ENCODE measurements at regions of chr19 and their contacts with region 1.

Region 1: DNA sequence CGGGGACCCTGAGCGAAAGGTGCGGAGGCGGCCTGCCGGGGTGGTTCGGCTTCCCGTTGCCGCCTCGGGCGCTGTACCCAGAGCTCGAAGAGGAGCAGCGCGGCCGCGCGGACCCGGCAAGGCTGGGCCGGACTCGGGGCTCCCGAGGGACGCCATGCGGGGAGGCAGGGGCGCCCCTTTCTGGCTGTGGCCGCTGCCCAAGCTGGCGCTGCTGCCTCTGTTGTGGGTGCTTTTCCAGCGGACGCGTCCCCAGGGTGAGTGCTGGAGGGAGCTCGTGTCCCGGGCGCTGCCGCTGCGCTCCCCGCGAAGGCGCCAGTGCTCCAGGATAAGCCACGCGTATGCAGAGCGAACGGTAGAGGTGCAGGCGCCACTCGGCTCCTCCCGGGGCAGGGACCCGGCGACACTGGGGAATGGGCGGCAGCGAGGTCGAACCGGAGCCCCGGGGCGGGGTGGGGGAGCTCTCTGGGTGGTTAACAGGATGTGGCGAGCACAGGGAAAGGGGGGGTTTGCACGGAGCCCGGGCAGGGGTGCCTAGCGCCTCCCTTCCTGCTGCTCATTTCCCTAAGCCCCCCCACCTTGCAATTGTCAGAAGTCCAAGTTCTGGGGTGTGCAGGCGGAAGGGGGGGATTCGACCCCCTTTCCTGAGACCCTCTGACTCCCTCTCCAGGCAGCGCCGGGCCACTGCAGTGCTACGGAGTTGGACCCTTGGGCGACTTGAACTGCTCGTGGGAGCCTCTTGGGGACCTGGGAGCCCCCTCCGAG is at the start of gene IL27RA:
- DNase-seq: peak; percentile 85
- ATAC-seq: peak; percentile 85
- H3K4me3 Mint-ChIP-seq: peak within 1 kb of the TSS; percentile 97
- H3K27ac Mint-ChIP-seq: peak within 1 kb of the TSS; percentile 97
- H3K4me1 Mint-ChIP-seq: peaks cover 15% of the 10 kb centered on the region
- H3K27me3 Mint-ChIP-seq: peaks cover 4% of the 10 kb centered on the region
- total RNA-seq, gene IL27RA: 41.6 to 43.8 TPM

Region 2: DNA sequence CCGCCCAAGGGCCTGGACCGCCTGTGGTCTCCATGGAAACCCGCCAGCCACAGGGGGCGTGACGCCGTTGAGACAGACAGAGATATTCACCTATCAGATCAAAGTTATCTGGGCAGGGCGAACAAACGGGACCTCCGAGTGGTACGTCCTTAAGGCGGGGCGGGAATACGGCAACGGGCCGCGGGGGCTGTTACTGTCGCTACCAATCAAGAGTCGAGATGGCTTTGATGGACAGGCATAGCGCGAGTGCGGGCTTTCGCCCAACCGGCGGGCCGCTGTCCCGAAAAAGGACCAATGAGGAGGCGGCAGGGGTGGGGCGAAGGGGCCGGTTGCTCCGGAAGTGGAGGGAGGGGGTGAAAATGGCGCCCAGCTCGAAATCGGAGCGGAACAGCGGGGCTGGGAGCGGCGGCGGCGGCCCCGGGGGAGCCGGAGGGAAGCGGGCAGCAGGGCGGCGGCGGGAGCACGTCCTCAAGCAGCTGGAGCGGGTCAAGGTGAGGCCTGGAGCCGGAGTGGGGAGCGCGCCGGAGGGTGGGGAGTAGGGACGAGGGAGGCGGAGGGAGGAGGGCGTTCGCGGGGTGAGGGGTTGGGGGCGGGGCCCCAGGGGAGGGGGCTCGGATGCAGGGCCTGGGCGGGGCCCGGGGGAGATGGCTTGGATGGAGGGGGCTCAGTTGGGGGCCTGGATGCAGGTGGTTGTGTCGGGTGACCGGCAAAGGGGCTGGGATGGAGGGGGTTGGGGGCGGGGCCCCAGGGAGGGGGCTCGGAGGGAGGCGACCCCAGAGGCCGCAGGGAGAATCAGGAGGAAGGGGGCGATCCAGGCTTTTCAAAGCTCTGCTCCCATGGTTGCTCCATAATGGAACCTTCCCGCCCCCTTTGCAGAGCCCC is 79.5 kb before region 1 on chr19 and contains the start of gene DCAF15:
- POLR2A ChIA-PET with region 1: interaction called, 30 read pairs
- DNase-seq: peak; percentile 95
- ATAC-seq: peak; percentile 99
- H3K4me3 Mint-ChIP-seq: peak within 1 kb of the TSS; percentile 99
- H3K27ac Mint-ChIP-seq: peak within 1 kb of the TSS; percentile 93
- H3K4me1 Mint-ChIP-seq: peaks cover 14% of the 10 kb centered on the region
- H3K27me3 Mint-ChIP-seq: no peaks in the 10 kb centered on the region
- total RNA-seq, gene DCAF15: 105 to 106 TPM

Region 3: GRCh38 chr19:13986348-13986904 is 45.5 kb before region 1 on chr19:
- POLR2A ChIA-PET with region 1: interaction called, 43 read pairs
- DNase-seq: peak; percentile 98
- ATAC-seq: peak; percentile 93
- H3K4me3 Mint-ChIP-seq: peak overlapping the region; percentile 69
- H3K27ac Mint-ChIP-seq: peak overlapping the region; percentile 98
- H3K4me1 Mint-ChIP-seq: peaks cover 60% of the 10 kb centered on the region
- H3K27me3 Mint-ChIP-seq: no peaks in the 10 kb centered on the region

Region 4: DNA sequence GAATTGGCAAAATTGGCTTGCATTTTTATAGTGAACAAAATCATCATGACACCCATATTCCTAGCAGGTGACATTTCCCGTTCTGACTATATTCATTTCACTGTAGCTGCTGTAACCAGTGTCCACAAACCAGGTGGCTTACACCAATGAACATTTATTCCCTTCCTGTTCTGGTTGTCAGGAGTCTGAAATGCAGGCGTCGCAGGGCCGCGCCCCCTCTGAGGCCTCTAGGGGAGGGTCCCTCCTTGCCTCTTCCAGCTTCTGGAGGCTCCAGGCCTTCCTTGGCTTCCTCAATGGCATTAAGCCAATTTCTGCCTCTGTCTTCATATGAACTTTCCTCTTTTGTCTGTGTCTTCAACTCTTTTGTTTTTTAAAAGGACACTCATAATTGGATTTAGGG is 10.4 kb before region 1 on chr19:
- POLR2A ChIA-PET with region 1: interaction called, 21 read pairs
- DNase-seq: no peak
- ATAC-seq: no peak
- H3K4me3 Mint-ChIP-seq: no peak overlapping the region
- H3K27ac Mint-ChIP-seq: no peak overlapping the region
- H3K4me1 Mint-ChIP-seq: peaks cover 6% of the 10 kb centered on the region
- H3K27me3 Mint-ChIP-seq: no peaks in the 10 kb centered on the region

Region 5: DNA sequence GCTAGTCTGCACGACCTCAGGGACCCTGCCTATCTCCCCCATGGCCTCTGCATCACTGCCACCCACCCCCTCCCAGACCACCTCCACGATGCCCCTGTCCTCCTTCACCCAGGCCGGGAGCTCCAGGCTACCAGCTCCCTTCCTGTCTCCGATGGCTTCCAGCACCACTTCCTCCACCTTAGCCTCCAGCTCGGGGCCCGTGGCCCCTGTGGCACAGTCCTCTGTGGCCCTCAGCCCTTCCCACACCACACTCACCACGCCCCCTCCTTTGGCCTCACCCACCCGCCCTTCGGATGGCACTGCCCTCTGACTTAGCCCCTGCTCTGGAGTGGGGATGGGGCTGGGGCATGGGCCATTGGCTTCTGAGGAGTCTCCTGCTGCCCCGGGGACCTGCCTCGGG is 22.8 kb after region 1 on chr19:
- POLR2A ChIA-PET with region 1: no interaction called
- DNase-seq: no peak
- ATAC-seq: no peak
- H3K4me3 Mint-ChIP-seq: no peak overlapping the region
- H3K27ac Mint-ChIP-seq: no peak overlapping the region
- H3K4me1 Mint-ChIP-seq: peaks cover 12% of the 10 kb centered on the region
- H3K27me3 Mint-ChIP-seq: peaks cover 24% of the 10 kb centered on the region

Region 6: DNA sequence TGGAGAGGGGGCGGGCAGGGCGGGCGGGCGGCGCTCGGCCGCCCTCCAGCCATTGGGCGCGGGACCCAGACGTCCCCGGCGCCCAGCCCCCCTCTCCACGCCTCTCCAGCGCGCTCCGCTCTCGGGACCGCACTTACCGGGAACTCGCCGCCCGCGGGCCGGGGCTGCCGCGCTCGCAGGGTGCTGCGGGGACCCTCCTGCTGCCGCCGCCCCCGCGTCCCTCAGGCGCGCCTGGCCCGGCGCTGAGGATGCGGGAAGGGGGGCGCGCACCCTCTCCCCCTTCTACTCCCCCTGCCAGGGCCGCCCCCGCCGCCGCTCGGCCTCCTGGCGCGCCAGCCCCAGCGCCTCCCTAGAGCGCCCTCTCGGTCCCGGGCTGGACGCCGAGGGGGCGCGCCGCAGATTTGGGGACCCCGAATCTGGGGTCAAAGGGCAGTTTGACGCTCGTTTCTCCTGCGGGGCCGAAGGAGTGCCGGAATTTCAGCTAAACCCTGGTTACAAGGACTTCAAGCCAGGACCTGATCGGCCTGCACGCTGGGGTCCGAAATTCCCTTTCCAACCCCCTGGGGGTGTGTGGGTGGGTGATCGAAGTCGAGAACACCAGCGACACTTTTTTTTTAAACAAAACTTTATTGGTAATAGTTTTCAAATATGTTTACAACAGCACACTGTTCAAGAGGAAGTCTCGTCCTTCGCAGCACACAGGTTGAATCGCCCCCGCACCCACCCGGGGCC is 59.3 kb after region 1 on chr19:
- POLR2A ChIA-PET with region 1: no interaction called
- DNase-seq: peak; percentile 86
- ATAC-seq: peak; percentile 75
- H3K4me3 Mint-ChIP-seq: peak overlapping the region; percentile 100
- H3K27ac Mint-ChIP-seq: peak overlapping the region; percentile 99
- H3K4me1 Mint-ChIP-seq: peaks cover 12% of the 10 kb centered on the region
- H3K27me3 Mint-ChIP-seq: no peaks in the 10 kb centered on the region